Activated CD4-positive, alpha-beta T cell treated with anti-CD3 and anti-CD28 coated beads, Interleukin-2, amount 10 ng/mL, durations not matched to agents 24 days and 14 days (primary cell): ENCODE measurements at regions of chr12 and their contacts with region 1.

Region 1: DNA sequence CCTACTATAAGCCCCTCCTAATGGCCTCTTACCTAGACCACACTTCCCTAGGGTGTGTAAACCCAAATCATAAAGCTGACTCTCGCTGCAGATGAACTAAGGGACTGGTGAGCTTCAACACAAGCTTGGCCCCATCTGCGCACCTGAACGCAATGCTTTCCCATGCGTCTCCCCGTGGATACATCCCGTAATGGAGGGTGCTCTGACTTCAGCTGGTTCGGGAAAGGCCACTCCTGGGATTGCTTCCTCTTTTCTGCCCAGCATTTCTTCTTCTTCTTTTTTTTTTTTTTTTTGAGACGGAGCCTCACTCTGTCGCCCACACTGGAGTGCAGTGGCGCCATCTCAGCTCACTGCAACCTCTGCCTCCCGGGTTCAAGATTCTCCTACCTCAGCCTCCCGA is 27.7 kb upstream of the ETFBKMT start:
- DNase-seq: no peak
- H3K4me3 Mint-ChIP-seq: no peak overlapping the region
- H3K27ac Mint-ChIP-seq: no peak overlapping the region
- H3K4me1 Mint-ChIP-seq: peaks cover 6% of the 10 kb centered on the region
- H3K27me3 Mint-ChIP-seq: no peaks in the 10 kb centered on the region

Region 2: DNA sequence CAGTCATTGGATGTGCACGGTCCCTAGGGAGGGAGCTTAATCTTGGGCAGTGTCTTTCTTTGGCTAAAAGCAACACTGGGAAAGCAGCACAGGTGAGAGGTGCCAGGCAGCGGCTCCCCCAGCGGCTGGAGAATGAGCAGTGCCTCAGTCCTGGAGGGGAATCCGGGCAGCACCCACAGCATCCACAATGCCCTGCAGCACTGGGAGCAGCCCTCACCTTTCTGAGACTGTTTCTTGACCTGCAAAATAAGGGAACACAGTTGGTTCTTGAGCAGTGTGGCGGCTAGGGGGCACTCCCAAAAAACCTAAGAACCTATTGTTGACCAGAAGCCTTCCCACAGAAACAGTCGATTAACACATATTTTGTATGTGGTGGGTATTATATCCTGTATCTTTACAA is 381.6 kb before region 1 on chr12:
- intact Hi-C with region 1: loop called (anchors 2 kb)
- DNase-seq: no peak
- H3K4me3 Mint-ChIP-seq: no peak overlapping the region
- H3K27ac Mint-ChIP-seq: no peak overlapping the region
- H3K4me1 Mint-ChIP-seq: peaks cover 2% of the 10 kb centered on the region
- H3K27me3 Mint-ChIP-seq: peaks cover 11% of the 10 kb centered on the region

Region 3: GRCh38 chr12:31406345-31406744 is 225.4 kb before region 1 on chr12:
- intact Hi-C with region 1: loop called (anchors 1 kb)
- DNase-seq: no peak
- H3K4me3 Mint-ChIP-seq: no peak overlapping the region
- H3K27ac Mint-ChIP-seq: no peak overlapping the region
- H3K4me1 Mint-ChIP-seq: peaks cover 3% of the 10 kb centered on the region
- H3K27me3 Mint-ChIP-seq: peaks cover 7% of the 10 kb centered on the region